Posterior vena cava (tissue), 2 donors: ENCODE measurements at regions of chr12 and their contacts with region 1.

Region 1: GRCh38 chr12:67116134-67116533 is 153.0 kb upstream of the CAND1 start:
- DNase-seq: no peak

Region 2: DNA sequence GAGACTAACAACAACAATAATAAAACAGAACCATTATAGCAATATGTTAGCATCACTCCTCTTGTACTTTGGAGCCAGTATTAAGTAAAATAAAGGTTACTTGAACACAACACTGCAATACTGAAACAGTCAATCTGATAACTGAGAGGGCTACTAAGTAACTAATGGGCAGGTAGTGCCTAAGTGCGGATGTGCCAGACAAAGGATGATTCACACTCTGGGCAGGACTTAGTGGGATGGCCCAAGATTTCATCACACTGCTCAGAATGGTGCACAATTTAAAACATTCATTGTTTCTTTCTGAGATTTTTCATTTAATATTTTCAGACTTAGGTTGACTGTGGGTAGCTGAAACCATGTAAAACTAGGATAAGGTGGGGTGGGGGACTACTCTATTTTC is 21.1 kb after region 1 on chr12:
- intact Hi-C with region 1: no loop called
- DNase-seq: no peak

Region 3: GRCh38 chr12:67609226-67609870 is 493.2 kb after region 1 on chr12:
- intact Hi-C with region 1: loop called in 1 of 2 experiments (anchors 5 kb)
- DNase-seq: no peak